ENCODE measurements at regions of chr4 and their contacts with region 1.

Region 1: DNA sequence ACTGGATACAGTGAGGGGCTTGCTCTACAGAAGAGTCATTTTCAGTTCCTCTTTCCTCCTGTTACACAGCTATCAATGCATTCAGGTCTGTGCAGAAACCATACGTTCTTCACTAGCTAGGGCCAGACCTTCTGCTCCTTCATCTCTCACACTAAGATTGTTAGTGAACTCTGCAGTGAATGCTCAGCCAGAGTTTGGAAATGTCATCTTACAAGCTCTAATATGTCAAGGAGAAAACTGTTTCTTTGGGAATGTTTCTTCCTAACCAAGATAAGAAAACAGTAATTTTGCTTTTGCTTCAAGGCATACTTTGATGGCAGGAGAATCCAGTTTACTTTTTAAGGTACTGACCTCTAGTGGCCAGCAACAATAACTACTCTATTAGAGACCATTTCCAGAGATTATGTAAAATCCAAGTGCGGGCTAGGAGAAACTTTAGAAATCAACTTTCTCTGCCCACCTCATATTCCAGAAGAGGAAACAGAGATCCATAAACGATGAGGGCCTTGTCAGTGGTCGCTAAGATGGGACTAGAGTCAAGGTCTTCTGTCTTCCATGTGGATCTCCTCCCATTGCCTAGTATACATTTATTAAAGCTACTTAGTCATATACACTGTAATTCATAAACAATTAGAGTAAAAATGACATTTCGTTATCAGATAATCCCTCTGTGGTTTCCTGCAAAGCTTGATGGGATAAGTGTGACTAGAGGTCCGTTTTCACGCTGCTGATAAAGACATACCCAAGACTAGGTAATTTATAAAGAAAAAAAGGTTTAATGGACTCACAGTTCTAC is 12.1 kb upstream of the CC2D2A start:
- DNase-seq: no peak
- H3K4me3 ChIP-seq: no peak overlapping the region
- H3K27ac ChIP-seq: no peak overlapping the region
- H3K4me1 ChIP-seq: no peaks in the 10 kb centered on the region
- H3K27me3 ChIP-seq: no peaks in the 10 kb centered on the region
- CTCF ChIP-seq: peak; percentile 58

Region 2: GRCh38 chr4:15231265-15232091 is 226.1 kb before region 1 on chr4:
- intact Hi-C with region 1: loop called (anchors 5 kb)
- DNase-seq: peak; percentile 84
- H3K4me3 ChIP-seq: no peak overlapping the region
- H3K27ac ChIP-seq: no peak overlapping the region
- H3K4me1 ChIP-seq: no peaks in the 10 kb centered on the region
- H3K27me3 ChIP-seq: no peaks in the 10 kb centered on the region
- CTCF ChIP-seq: peak; percentile 46

Region 3: GRCh38 chr4:15868111-15868510 is 410.5 kb after region 1 on chr4:
- intact Hi-C with region 1: no loop called
- DNase-seq: no peak
- H3K4me3 ChIP-seq: no peak overlapping the region
- H3K27ac ChIP-seq: no peak overlapping the region
- H3K4me1 ChIP-seq: no peaks in the 10 kb centered on the region
- H3K27me3 ChIP-seq: no peaks in the 10 kb centered on the region
- CTCF ChIP-seq: no peak

Measured in colonic mucosa (tissue), 4 donors.